ENCODE measurements at regions of chr5 and their contacts with region 1.

Region 1: DNA sequence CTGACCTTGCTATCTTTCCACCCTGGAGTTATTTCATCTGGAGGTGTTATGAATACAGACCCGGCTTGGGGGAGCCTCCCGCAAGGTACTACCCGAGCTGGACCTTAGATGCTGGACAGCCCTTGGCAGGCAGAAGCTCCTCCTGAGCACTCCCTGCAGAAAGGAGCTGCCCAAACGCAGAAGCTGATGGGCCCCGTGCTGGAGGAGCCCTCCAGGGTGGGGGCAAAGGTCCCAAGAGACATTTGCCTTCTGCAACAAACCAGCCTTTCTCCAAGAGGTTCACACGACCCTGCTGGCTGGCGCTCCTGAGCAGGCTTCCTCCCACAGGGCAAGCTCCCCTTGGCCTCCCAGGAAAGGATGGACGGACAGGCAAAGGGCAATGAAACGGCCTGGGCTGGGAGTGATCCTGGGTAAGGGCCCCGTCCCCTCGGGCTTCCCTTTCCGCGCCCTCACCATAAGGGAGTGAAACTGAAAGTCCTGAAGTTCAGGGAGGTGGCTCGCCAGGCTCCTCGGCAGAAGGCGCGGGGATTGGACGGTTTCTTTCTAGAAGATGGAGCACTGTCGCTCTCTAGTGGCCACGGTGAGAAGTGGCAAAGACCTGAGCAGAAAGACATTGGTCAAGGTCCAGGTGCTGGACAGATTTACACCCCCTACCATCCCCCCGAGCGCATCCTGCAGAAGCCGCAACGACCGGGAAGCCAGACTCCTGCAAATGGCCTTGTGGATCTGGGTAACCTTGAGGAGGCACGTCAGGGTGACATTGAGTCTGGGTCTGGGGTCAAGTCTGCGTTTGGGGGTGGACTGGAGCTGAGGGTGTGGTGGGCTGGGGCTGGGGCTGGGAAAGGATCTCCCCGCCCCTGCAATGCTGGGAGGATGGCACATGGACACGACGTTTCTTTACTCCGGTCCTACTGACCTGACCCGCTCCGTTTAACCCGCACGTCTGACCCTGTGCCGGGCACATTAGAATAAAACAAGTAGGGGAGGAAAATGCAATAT is 56.4 kb downstream of the NEURL1B start:
- DNase-seq: peak; percentile 93
- H3K4me3 ChIP-seq: peak overlapping the region; percentile 34 to 45
- H3K27ac ChIP-seq: peak overlapping the region; percentile 48 to 85
- H3K4me1 ChIP-seq: peaks cover 55% of the 10 kb centered on the region
- H3K27me3 ChIP-seq: no peaks in the 10 kb centered on the region
- CTCF ChIP-seq: peak; percentile 83 to 92 (median 92)
- POLR2A ChIP-seq: no peak

Region 2: DNA sequence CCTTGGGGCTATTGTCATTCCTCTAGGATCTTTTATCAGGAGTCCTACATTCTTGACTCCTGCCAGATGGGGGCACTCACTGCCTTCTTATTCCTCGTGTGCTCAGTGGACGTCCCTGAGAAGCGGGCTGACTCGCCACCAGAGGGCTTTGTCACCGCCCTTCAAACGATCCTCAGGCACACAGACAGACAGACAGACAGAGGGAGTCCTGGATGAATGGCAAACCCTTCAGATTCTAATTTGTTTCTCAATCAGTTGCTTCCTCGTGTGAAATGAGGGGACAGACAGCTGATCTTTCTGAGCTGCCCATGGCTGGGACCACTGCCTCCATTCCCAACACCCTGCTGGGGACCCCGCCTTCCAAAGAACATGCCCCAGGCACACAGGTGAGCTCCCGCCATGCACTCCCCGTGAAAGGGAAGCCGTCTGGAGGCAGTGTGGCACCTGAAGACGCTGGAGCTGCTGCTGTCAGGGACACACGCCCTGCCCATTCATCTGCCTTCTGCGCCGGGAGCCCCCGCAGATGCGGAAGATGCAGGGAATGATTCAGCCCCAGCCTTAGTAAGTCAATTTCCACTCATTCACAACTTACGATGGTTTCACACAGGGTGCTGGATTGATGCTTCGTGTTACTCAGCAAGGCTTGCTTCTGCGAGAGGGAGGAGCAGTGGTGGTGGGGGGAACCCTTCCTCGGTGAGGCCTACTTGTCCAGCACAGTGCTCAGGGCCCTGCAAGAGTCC is 218.2 kb before region 1 on chr5:
- intact Hi-C with region 1: loop called (anchors 2 kb)
- DNase-seq: peak; percentile 91
- H3K4me3 ChIP-seq: no peak overlapping the region
- H3K27ac ChIP-seq: peak overlapping the region in 1 of 2 donors; percentile 5
- H3K4me1 ChIP-seq: peaks cover 3% of the 10 kb centered on the region
- H3K27me3 ChIP-seq: no peaks in the 10 kb centered on the region
- CTCF ChIP-seq: peak; percentile 69 to 97 (median 93)
- POLR2A ChIP-seq: no peak

Region 3: DNA sequence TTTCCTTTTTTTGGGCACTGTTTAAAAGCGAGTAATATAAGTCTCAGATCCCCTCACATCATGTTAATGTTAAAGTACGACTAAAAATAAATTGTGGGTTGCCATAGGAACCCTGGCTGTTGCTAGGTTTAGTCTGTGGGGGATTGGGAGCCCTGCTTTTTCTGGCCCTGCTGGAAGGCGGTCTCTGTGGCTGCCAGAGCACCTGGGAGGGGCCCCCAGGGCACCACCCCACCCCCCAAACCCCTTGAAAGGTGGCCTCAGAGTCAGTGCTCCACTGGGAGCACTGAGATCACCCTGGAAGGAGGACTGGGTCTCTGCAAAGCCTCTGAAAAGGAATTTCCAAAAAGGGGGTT is 122.6 kb before region 1 on chr5:
- intact Hi-C with region 1: no loop called
- DNase-seq: no peak
- H3K4me3 ChIP-seq: no peak overlapping the region
- H3K27ac ChIP-seq: no peak overlapping the region
- H3K4me1 ChIP-seq: peaks cover 7% of the 10 kb centered on the region
- H3K27me3 ChIP-seq: no peaks in the 10 kb centered on the region
- CTCF ChIP-seq: no peak
- POLR2A ChIP-seq: no peak

Measured in testis (tissue), 5 donors.